ENCODE measurements at regions of chr2 and their contacts with region 1.

Region 1: DNA sequence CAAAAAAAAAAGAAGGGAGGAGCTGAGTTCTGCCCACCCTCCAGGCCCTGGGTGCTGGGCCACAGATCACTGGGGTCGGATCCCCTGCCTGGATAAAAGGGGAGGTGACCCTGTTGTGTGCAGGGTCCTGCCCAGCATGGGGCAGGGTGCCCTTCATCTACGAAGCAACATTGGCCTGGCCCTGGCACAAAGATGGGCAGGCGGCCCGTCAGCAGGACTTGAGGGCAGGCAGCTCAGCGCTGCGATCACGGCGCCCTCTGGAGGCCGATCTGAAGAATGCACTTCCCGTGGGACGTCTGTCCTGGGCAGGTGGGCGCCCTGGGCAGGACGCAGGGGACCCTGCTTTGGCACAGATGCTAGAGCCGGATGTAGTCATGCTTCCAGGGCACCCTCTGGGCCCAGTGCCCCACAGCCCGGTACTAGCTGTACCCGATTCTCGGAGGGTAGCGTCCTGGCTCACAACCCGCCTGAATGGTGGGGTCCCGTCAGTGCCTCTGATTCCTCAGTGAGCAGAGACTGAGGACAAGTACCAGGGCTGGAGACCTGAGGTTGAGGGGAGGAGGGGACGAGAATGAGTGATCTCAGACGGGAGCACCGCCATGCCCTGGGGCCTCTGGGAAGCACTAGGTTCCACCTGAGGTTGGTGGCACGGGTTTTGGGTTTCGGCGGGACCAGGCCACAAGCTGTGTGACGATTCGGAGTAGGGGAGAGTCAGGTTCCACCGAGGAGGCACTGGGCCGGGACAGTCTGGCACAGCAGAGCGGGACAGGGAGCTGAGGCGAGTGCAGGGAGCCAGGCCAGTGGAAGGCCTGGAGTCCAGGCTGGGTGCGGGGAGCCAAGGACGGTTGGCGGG is 18.0 kb downstream of the ARID5A start:
- DNase-seq: peak; percentile 37 to 69
- ATAC-seq: peak in 1 of 2 experiments; percentile 48; a peak in 3 of 6 replicates
- H3K4me3 ChIP-seq: no peak overlapping the region
- H3K27ac ChIP-seq: peak overlapping the region; percentile 87 to 88
- H3K4me1 ChIP-seq: peaks cover 54% of the 10 kb centered on the region
- CTCF ChIP-seq: peak; percentile 74
- EP300 ChIP-seq: no peak
- POLR2A ChIP-seq: no peak
- RAD21 ChIP-seq: peak; percentile 60 to 61

Region 2: GRCh38 chr2:96407041-96407918 is 147.2 kb before region 1 on chr2:
- CTCF ChIA-PET with region 1: interaction called, 10 read pairs
- POLR2A ChIA-PET with region 1: no interaction called
- DNase-seq: peak; percentile 80 to 87
- ATAC-seq: peak; percentile 80 to 88
- H3K4me3 ChIP-seq: no peak overlapping the region
- H3K27ac ChIP-seq: peak overlapping the region in 1 of 2 experiments; percentile 68; a peak in 2 of 6 replicates
- H3K4me1 ChIP-seq: peaks cover 35% of the 10 kb centered on the region
- CTCF ChIP-seq: peak; percentile 78
- EP300 ChIP-seq: no peak
- POLR2A ChIP-seq: no peak
- RAD21 ChIP-seq: peak; percentile 78 to 83

Region 3: DNA sequence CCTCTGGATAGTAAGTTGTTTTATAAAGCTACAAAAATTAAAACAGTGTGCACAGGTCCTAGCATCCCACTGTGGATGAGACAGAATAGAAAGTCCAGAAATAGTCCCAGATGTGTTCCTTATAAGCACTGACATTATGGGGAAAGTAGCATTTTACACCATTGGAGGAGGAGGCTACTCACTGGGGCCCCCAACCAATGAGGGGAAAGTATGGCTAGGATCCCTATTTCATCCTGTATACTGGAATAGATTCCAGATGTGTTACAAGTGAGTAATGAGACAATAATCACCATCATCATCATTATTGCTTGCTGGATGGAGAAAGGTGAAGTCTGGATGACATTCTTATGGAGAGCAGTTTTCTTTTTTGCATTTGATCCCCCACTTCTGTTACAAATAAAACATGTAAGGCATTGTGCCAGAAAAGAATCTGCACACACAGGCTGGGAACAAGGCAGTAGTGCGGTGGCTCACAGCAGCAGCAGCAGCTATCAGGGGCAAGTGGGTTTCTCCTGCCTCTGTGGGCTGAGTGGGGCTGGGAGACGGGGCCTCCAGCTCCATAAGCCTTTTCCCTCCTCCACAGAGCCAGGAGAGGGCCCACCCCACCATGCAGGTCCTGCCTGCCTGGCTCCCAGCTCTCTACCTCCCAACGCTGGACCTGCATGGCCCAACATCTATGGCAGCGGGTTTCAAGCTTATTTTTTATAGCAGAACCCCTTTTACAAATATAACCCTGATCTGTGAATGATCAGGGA is 12.9 kb before region 1 on chr2:
- CTCF ChIA-PET with region 1: interaction called, 60 read pairs
- POLR2A ChIA-PET with region 1: no interaction called
- DNase-seq: no peak
- ATAC-seq: no peak
- H3K4me3 ChIP-seq: no peak overlapping the region
- H3K27ac ChIP-seq: no peak overlapping the region
- H3K4me1 ChIP-seq: peaks cover 20% of the 10 kb centered on the region
- CTCF ChIP-seq: no peak
- EP300 ChIP-seq: no peak
- POLR2A ChIP-seq: no peak
- RAD21 ChIP-seq: no peak

Region 4: DNA sequence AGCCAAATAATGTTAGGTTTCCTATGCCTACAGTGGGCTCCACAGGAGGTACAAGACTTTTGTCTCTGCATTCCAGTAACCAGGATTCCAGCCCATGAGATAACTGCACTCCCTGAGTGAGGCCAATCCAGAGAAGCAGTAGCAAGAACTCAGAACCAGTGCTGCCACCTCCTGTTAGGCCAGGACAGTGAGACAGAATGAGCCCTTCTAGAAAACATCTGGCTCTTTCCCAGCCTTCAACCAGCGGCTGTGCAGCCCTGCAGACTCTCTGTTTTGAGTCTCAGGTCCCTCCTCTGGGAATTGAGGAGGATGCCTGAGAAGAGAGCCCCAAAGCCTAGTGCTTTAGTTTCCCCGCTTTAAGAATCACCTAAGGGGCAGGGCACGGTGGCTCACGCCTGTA is 26.3 kb after region 1 on chr2:
- CTCF ChIA-PET with region 1: interaction called, 113 read pairs
- POLR2A ChIA-PET with region 1: interaction called, 3 read pairs
- DNase-seq: peak; percentile 18 to 46
- ATAC-seq: peak; percentile 93 to 97
- H3K4me3 ChIP-seq: no peak overlapping the region
- H3K27ac ChIP-seq: no peak overlapping the region
- H3K4me1 ChIP-seq: peaks cover 6% of the 10 kb centered on the region; the same call in 1 of the 3 replicates
- CTCF ChIP-seq: peak; percentile 44
- EP300 ChIP-seq: no peak
- POLR2A ChIP-seq: no peak
- RAD21 ChIP-seq: peak; percentile 62 to 65

Region 5: DNA sequence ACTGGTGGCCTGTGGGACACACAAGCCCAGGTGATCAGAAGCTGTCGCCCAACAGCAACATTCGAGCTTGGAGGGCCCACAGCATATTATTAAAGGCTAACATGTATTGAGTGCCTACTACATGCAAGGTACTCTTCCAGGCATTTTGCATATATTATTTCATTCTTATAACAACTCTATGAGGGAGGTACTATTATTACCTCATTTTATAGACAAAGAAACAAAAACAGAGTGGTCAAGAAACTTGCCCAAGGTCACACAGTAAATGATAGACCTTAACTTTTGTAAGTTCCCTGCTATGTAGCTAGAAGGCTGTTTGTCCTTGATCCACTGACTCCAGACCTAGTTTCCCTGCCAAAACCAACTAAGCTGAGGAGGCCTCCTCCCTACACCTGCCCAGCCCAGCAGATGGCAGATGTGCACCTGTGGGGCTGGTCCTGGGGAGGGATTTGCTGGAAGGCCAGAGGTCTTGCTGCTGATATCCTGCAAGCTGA is 47.9 kb after region 1 on chr2:
- CTCF ChIA-PET with region 1: interaction called, 11 read pairs
- POLR2A ChIA-PET with region 1: no interaction called
- DNase-seq: peak in 1 of 2 experiments; percentile 23
- ATAC-seq: no peak
- H3K4me3 ChIP-seq: no peak overlapping the region
- H3K27ac ChIP-seq: no peak overlapping the region
- H3K4me1 ChIP-seq: peaks cover 13% of the 10 kb centered on the region; the same call in 2 of the 3 replicates
- CTCF ChIP-seq: no peak
- EP300 ChIP-seq: no peak
- POLR2A ChIP-seq: no peak
- RAD21 ChIP-seq: 0 out of 5 replicates have a peak, but pooled peaks of 1 of the 2 experiments have one; percentile 12

Region 6: DNA sequence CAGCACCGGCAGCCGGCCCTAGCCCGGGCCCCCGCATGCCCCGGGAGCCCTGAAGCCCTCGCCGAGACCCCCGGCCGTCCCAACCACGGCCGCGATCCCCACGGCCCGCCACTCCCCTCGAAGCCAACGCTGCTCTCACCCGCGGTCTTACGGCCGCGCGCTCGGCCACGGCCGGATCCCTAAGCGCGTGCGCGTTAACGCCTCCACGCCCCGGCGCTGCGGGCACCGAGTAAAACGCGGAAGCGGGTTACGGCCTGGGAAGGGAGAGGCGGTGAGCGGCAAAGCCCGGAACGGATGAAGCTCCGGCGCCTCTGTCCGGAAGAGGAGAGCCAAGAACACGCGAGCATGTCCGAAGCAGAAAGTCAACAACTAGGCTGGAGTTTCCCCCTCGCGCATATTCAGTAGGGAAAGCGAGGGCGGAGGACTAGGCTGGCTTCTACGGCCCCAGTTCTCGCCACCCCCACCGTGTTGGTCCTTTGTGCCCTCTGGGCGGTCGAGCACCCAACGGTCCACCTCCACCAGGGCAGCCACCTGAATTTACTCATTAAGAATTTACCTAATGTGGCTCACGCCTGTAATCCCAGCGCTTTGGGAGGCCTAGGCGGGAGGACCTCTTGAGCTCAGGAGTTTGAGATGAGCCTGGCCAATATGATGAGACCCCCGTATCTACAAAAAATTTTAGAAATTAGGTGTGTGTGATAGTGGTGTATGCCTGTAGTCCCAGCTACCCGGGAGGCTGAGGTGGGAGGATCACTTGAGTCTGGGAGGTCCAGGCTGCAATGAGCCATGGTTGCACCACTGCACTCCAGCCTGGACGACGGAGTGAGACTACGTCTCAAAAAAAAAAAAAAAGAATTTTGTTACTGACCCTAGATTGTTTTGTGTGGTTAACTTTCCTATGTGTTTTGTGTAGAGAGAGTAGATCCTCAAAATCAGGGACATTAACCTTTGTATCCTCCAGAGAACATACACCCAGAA is 83.9 kb after region 1 on chr2 and contains the start of gene KANSL3:
- CTCF ChIA-PET with region 1: interaction called, 12 read pairs
- POLR2A ChIA-PET with region 1: interaction called, 7 read pairs
- DNase-seq: peak; percentile 66 to 95
- ATAC-seq: peak; percentile 79 to 86
- H3K4me3 ChIP-seq: peak within 1 kb of the TSS; percentile 52
- H3K27ac ChIP-seq: peak within 1 kb of the TSS; percentile 94 to 98
- H3K4me1 ChIP-seq: peaks cover 29% of the 10 kb centered on the region; the same call in 2 of the 3 replicates
- CTCF ChIP-seq: no peak
- EP300 ChIP-seq: 0 out of 5 replicates have a peak, but pooled peaks of 1 of the 2 experiments have one; percentile 37
- POLR2A ChIP-seq: peak; percentile 80
- RAD21 ChIP-seq: peak; percentile 28 to 47; a peak in 4 of 5 replicates
- polyA plus RNA-seq, gene KANSL3: 23.0 and 33.1 TPM in 2 replicates

Region 7: GRCh38 chr2:96801005-96801785 is 246.7 kb after region 1 on chr2:
- CTCF ChIA-PET with region 1: interaction called, 81 read pairs
- POLR2A ChIA-PET with region 1: no interaction called
- DNase-seq: peak; percentile 68 to 72
- ATAC-seq: peak; percentile 93 to 98
- H3K4me3 ChIP-seq: no peak overlapping the region
- H3K27ac ChIP-seq: peak overlapping the region; percentile 23 to 69; a peak in 3 of 6 replicates
- H3K4me1 ChIP-seq: peaks cover 7% of the 10 kb centered on the region; the same call in 1 of the 3 replicates
- CTCF ChIP-seq: peak; percentile 83
- EP300 ChIP-seq: no peak
- POLR2A ChIP-seq: no peak
- RAD21 ChIP-seq: peak; percentile 85 to 90